ENCODE measurements at regions of chr1 and their contacts with region 1.

Region 1: GRCh38 chr1:89622895-89623294 is 10.0 kb upstream of the LRRC8C start:
- DNase-seq: peak in 1 of 35 experiments; percentile 67
- ATAC-seq: peak; percentile 54 to 67 (median 64)
- H3K4me3 ChIP-seq: no peak overlapping the region
- H3K4me3 Mint-ChIP-seq: no peak overlapping the region
- H3K27ac ChIP-seq: no peak overlapping the region
- H3K27ac Mint-ChIP-seq: peak overlapping the region; percentile 72 to 75
- H3K4me1 ChIP-seq: peaks cover 2 to 7% of the 10 kb centered on the region in 2 experiments
- H3K4me1 Mint-ChIP-seq: peaks cover 57 to 66% (median 66%) of the 10 kb centered on the region in 3 donors
- H3K27me3 ChIP-seq: no peaks in the 10 kb centered on the region
- H3K27me3 Mint-ChIP-seq: no peaks in the 10 kb centered on the region

Region 2: GRCh38 chr1:88488277-88488676 is 1134.6 kb before region 1 on chr1:
- CTCF ChIA-PET with region 1: no interaction called
- POLR2A ChIA-PET with region 1: no interaction called
- DNase-seq: no peak
- ATAC-seq: no peak
- H3K4me3 ChIP-seq: no peak overlapping the region
- H3K4me3 Mint-ChIP-seq: no peak overlapping the region
- H3K27ac ChIP-seq: no peak overlapping the region
- H3K27ac Mint-ChIP-seq: no peak overlapping the region
- H3K4me1 ChIP-seq: no peaks in the 10 kb centered on the region
- H3K4me1 Mint-ChIP-seq: no peaks in the 10 kb centered on the region
- H3K27me3 ChIP-seq: peaks cover 0 to 2% of the 10 kb centered on the region in 2 experiments
- H3K27me3 Mint-ChIP-seq: peaks cover 8 to 12% of the 10 kb centered on the region in 2 donors

Region 3: GRCh38 chr1:89167590-89168230 is 455.2 kb before region 1 on chr1:
- CTCF ChIA-PET with region 1: no interaction called
- POLR2A ChIA-PET with region 1: no interaction called
- DNase-seq: no peak
- ATAC-seq: no peak
- H3K4me3 ChIP-seq: no peak overlapping the region
- H3K4me3 Mint-ChIP-seq: no peak overlapping the region
- H3K27ac ChIP-seq: no peak overlapping the region
- H3K27ac Mint-ChIP-seq: no peak overlapping the region
- H3K4me1 ChIP-seq: no peaks in the 10 kb centered on the region
- H3K4me1 Mint-ChIP-seq: peaks cover 0 to 5% (median 0%) of the 10 kb centered on the region in 3 donors
- H3K27me3 ChIP-seq: no peaks in the 10 kb centered on the region
- H3K27me3 Mint-ChIP-seq: no peaks in the 10 kb centered on the region

Region 4: DNA sequence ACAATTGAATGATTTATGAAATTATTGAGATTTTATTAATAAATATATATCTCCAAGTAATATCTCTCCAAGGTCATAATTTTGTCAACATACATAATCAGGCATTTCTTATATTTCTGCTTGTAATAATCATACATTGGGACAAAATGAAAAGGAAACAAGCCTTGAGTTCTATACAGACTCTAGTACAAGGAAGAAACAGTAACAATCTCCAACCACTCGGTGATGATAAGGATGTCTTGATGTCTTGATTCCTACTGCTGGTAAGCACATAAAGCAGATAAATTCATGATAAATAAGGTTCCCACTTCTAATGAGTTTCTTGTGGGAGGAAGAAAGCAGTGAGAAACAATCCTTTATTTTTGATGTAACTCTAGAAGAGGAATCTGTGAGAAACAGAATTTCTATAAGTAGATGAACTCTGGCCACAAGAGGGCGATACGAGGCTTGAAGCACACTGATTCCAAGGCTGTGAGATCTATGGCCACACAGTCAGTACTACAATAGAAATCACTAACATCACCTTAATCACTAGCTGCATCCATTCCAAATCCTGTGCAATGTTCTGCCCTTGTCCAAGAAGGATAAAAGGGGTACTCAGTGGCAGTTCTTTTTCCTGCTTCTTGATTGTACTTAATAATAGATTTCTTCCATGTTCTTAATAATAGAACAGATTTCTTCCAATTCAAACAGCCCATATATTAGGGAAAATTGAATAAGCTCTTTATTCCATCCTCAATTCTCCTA is 139.7 kb before region 1 on chr1:
- CTCF ChIA-PET with region 1: interaction called, 8 to 28 read pairs
- POLR2A ChIA-PET with region 1: no interaction called
- DNase-seq: peak; percentile 40 to 87 (median 70)
- ATAC-seq: peak; percentile 85 to 94 (median 88)
- H3K4me3 ChIP-seq: no peak overlapping the region
- H3K4me3 Mint-ChIP-seq: no peak overlapping the region
- H3K27ac ChIP-seq: no peak overlapping the region
- H3K27ac Mint-ChIP-seq: no peak overlapping the region
- H3K4me1 ChIP-seq: peaks cover 0 to 7% of the 10 kb centered on the region in 2 experiments
- H3K4me1 Mint-ChIP-seq: peaks cover 9 to 13% (median 11%) of the 10 kb centered on the region in 3 donors
- H3K27me3 ChIP-seq: peaks cover 0 to 3% of the 10 kb centered on the region in 2 experiments
- H3K27me3 Mint-ChIP-seq: peaks cover 0 to 3% of the 10 kb centered on the region in 2 donors

Region 5: DNA sequence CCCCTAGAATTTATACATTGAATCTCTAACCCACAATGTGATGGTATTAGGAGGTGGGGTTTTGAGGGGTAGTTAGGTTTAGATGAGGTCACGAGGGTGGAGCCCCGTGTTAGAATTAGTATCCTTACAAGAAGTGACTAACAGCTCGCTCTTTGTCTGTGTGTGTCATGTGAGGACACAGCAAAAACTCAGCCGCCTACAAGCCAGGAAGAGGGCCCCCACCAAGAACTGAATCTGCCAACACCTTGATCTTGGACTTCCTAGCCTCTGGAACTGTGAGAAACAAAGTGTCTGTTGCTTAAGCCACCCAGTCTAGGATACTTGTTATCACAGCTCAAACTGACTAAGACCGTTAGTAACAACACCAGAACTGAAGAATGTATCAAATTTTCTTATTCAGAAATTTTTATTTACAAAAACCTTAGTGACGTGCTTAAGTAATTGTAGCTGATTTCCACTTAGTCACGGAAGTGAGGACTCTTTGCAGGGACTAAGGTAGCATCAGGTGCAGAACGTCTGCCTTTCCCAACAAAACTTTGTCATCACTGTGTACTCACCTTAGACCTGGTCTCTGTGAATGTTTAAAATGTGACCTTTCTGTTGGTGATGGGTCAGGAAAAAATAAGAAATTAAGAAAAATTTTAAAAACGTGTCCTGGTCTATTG is 14.4 kb before region 1 on chr1:
- CTCF ChIA-PET with region 1: interaction called, 7 to 27 read pairs
- POLR2A ChIA-PET with region 1: interaction called, 5 to 18 read pairs
- DNase-seq: peak in 34 of 35 experiments; percentile 52 to 89 (median 75)
- ATAC-seq: peak; percentile 49 to 73 (median 58)
- H3K4me3 ChIP-seq: peak overlapping the region in 1 of 2 donors; percentile 41
- H3K4me3 Mint-ChIP-seq: peak overlapping the region; percentile 76 to 85 (median 84)
- H3K27ac ChIP-seq: peak overlapping the region; percentile 88
- H3K27ac Mint-ChIP-seq: peak overlapping the region; percentile 99 to 100
- H3K4me1 ChIP-seq: peaks cover 85% of the 10 kb centered on the region in 2 experiments
- H3K4me1 Mint-ChIP-seq: peaks cover 91 to 96% (median 96%) of the 10 kb centered on the region in 3 donors
- H3K27me3 ChIP-seq: no peaks in the 10 kb centered on the region
- H3K27me3 Mint-ChIP-seq: no peaks in the 10 kb centered on the region

Region 6: GRCh38 chr1:89820422-89821321 is 197.8 kb after region 1 on chr1 and contains the start of gene LRRC8D:
- CTCF ChIA-PET with region 1: no interaction called
- POLR2A ChIA-PET with region 1: no interaction called
- DNase-seq: peak; percentile 11 to 77 (median 40)
- ATAC-seq: peak; percentile 70 to 77 (median 71)
- H3K4me3 ChIP-seq: peak within 1 kb of the TSS; percentile 81
- H3K4me3 Mint-ChIP-seq: peak within 1 kb of the TSS; percentile 84 to 94 (median 87)
- H3K27ac ChIP-seq: peak within 1 kb of the TSS; percentile 52
- H3K27ac Mint-ChIP-seq: peak within 1 kb of the TSS; percentile 73 to 88
- H3K4me1 ChIP-seq: peaks cover 11 to 17% of the 10 kb centered on the region in 2 experiments
- H3K4me1 Mint-ChIP-seq: peaks cover 30 to 42% (median 38%) of the 10 kb centered on the region in 3 donors
- H3K27me3 ChIP-seq: no peaks in the 10 kb centered on the region
- H3K27me3 Mint-ChIP-seq: no peaks in the 10 kb centered on the region
- total RNA-seq, gene LRRC8D: 23.8 to 43.4 (median 33.0) TPM

Measured in T-cell (primary cell).